H1 (cell line): ENCODE measurements at regions of chr6 and their contacts with region 1.

Region 1: GRCh38 chr6:96075826-96076225 is 60.1 kb downstream of the FUT9 start:
- DNase-seq: no peak
- H3K4me3 ChIP-seq: no peak overlapping the region
- H3K27ac ChIP-seq: no peak overlapping the region
- H3K4me1 ChIP-seq: no peaks in the 10 kb centered on the region
- H3K27me3 ChIP-seq: no peaks in the 10 kb centered on the region
- CTCF ChIP-seq: no peak
- EP300 ChIP-seq: no peak
- POLR2A ChIP-seq: no peak
- RAD21 ChIP-seq: no peak

Region 2: GRCh38 chr6:96089173-96089572 is 13.3 kb after region 1 on chr6:
- CTCF ChIA-PET with region 1: interaction called, 14 read pairs
- POLR2A ChIA-PET with region 1: interaction called, 3 read pairs
- DNase-seq: peak in 1 of 2 experiments; percentile 29
- H3K4me3 ChIP-seq: no peak overlapping the region
- H3K27ac ChIP-seq: no peak overlapping the region
- H3K4me1 ChIP-seq: no peaks in the 10 kb centered on the region; a peak in 1 of 7 replicates
- H3K27me3 ChIP-seq: no peaks in the 10 kb centered on the region
- CTCF ChIP-seq: peak; percentile 59 to 78 (median 62)
- EP300 ChIP-seq: no peak
- POLR2A ChIP-seq: no peak
- RAD21 ChIP-seq: peak; percentile 76 to 84